MCF 10A (cell line): ENCODE measurements at regions of chr1 and their contacts with region 1.

Region 1: DNA sequence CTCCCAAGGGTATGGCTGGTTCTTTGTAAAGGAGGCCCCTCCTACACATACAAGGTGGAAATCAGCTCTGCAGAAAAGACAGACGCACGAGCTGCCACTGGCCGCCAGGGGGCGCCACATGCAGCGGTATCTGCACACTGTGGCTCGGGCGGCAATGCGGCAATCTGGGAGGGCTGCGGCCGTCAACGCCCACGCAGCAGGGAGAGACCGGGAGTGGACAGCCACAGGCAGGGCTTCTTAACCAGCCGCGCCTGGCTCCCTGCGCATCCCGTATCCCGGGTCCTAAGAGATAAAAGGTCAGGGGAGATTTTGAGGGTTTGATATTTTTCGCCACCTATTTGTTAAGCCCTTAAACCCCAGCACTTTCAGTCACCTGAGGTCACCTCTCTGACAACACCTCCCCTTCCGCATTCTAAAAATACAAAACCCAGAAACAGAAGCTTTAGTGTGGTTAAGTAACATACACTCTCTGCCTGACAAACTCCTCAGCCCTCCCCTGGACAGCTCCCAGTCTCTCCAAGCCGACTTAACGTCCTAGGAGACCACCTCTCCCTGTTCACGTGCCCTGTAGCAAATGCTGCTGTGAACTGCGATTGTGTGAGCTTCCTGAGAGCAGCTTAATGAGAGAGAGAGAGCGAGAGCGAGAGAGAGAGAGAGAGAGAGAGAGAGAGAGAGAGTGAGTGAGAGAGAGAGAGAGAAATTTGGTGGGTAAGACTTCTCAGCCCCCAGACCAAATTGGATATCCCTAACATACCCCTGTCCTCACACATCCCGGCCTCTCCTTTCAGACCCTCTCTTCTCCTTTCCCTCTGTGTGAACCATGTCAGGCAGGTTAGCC is 13.5 kb upstream of the KCNA2 start:
- DNase-seq: peak; percentile 81
- H3K4me3 Mint-ChIP-seq: no peak overlapping the region
- H3K27ac Mint-ChIP-seq: no peak overlapping the region
- H3K4me1 Mint-ChIP-seq: peaks cover 6% of the 10 kb centered on the region
- H3K27me3 Mint-ChIP-seq: peaks cover 74% of the 10 kb centered on the region
- CTCF ChIP-seq: peak; percentile 94

Region 2: DNA sequence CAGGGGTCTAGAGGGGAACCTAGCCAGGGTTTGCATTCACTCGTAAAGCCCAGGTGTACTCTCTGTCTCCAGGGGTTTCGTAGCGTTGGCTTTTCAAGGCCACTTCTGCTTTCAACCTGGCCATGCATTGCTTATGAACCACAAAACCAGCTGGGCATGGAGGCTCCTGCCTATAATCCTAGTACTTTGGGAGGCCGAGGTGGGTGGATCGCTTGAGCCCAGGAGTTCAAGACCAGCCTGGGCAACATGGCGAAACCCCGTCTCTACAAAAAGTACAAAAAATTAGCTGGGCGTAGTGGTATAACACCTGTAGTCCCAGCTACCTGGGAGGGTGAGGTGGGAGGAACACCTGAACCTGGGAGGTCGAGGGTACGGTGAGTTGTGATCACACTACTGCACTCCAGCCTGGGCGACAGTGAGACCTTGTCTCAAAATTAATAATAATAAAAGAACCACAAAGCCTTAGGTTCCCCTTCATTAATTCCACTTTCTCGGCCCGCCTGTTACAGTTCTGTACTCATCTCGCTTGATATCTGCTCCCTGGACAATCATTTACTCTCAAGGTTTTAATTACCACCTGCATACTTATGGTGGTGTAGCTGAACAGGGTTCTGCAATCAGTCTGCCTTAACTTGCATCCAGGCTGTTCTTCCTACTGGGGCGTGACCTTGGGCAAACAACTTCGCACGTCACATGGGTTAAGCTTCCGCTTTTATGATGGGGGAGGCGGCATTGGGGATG is 234.9 kb before region 1 on chr1:
- CTCF ChIA-PET with region 1: no interaction called
- POLR2A ChIA-PET with region 1: no interaction called
- intact Hi-C with region 1: no loop called
- DNase-seq: no peak
- H3K4me3 Mint-ChIP-seq: no peak overlapping the region
- H3K27ac Mint-ChIP-seq: no peak overlapping the region
- H3K4me1 Mint-ChIP-seq: peaks cover 3% of the 10 kb centered on the region
- H3K27me3 Mint-ChIP-seq: no peaks in the 10 kb centered on the region
- CTCF ChIP-seq: no peak

Region 3: DNA sequence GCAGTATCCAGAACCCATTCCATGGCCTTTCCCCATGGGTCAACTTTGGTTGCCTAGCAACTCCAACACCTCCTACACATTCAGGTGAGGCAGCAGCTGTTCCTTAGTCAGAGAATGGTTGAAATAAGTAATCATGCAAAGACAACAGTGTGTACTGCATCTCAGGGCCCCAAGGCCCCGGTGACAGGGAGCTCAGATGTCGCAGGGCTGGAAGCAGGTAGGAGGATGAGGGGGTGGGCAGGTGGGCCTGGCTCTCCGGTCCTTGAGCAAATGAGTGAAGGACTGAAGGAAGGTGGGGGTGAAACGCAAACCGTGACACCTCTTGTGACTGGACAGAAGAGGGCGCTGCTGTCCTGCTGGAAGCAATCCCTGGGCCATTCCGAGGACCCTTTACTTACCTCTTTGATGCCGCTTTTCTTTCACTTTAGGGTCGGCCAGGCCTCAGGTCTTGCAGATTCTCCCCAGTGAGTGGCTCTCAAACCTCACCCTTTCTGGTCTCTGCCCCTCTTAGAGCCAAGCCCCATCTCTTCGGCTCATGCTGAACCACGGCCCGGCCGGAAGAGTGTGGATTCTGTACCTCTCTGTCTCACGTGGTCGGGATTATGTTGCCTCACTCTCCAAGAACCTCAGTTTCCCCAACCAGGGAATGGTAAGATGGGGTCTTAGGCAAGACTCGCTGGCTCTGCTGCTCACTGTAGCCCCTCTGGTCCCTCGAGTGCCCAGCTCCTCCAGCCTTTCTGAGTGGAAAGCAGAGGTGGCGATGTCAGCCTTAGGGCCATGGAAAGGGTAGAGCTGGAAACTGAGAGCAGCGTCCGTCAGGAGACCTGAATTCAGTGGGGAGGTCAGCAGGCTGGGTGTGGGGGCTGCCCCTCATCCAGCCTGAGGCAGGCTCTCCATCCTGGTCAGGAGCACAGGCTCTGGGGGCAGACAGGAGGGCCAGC is 95.0 kb before region 1 on chr1:
- CTCF ChIA-PET with region 1: interaction called, 8 read pairs
- POLR2A ChIA-PET with region 1: no interaction called
- intact Hi-C with region 1: loop called (anchors 1 kb)
- DNase-seq: peak; percentile 40
- H3K4me3 Mint-ChIP-seq: no peak overlapping the region
- H3K27ac Mint-ChIP-seq: no peak overlapping the region
- H3K4me1 Mint-ChIP-seq: peaks cover 8% of the 10 kb centered on the region
- H3K27me3 Mint-ChIP-seq: peaks cover 65% of the 10 kb centered on the region
- CTCF ChIP-seq: peak; percentile 78

Region 4: GRCh38 chr1:110605901-110606656 is 13.6 kb before region 1 on chr1 and contains the start of gene KCNA2:
- CTCF ChIA-PET with region 1: interaction called, 15 read pairs
- POLR2A ChIA-PET with region 1: no interaction called
- intact Hi-C with region 1: no loop called
- DNase-seq: no peak
- H3K4me3 Mint-ChIP-seq: peak within 1 kb of the TSS; percentile 36
- H3K27ac Mint-ChIP-seq: no peak within 1 kb of the TSS
- H3K4me1 Mint-ChIP-seq: no peaks in the 10 kb centered on the region
- H3K27me3 Mint-ChIP-seq: peaks cover 73% of the 10 kb centered on the region
- CTCF ChIP-seq: no peak
- total RNA-seq, gene KCNA2: not detected in 2 replicates

Region 5: GRCh38 chr1:110630839-110631663 is 11.4 kb after region 1 on chr1:
- CTCF ChIA-PET with region 1: interaction called, 37 read pairs
- POLR2A ChIA-PET with region 1: no interaction called
- intact Hi-C with region 1: no loop called
- DNase-seq: peak; percentile 74
- H3K4me3 Mint-ChIP-seq: no peak overlapping the region
- H3K27ac Mint-ChIP-seq: no peak overlapping the region
- H3K4me1 Mint-ChIP-seq: peaks cover 13% of the 10 kb centered on the region
- H3K27me3 Mint-ChIP-seq: peaks cover 31% of the 10 kb centered on the region
- CTCF ChIP-seq: peak; percentile 80

Region 6: GRCh38 chr1:110638058-110638457 is 18.4 kb after region 1 on chr1:
- CTCF ChIA-PET with region 1: interaction called, 18 read pairs
- POLR2A ChIA-PET with region 1: no interaction called
- intact Hi-C with region 1: no loop called
- DNase-seq: no peak
- H3K4me3 Mint-ChIP-seq: no peak overlapping the region
- H3K27ac Mint-ChIP-seq: no peak overlapping the region
- H3K4me1 Mint-ChIP-seq: peaks cover 19% of the 10 kb centered on the region
- H3K27me3 Mint-ChIP-seq: peaks cover 53% of the 10 kb centered on the region
- CTCF ChIP-seq: no peak

Region 7: GRCh38 chr1:110766025-110766647 is 146.5 kb after region 1 on chr1:
- CTCF ChIA-PET with region 1: interaction called, 48 read pairs
- POLR2A ChIA-PET with region 1: no interaction called
- intact Hi-C with region 1: loop called (anchors 1 kb)
- DNase-seq: peak; percentile 58
- H3K4me3 Mint-ChIP-seq: no peak overlapping the region
- H3K27ac Mint-ChIP-seq: no peak overlapping the region
- H3K4me1 Mint-ChIP-seq: no peaks in the 10 kb centered on the region
- H3K27me3 Mint-ChIP-seq: peaks cover 58% of the 10 kb centered on the region
- CTCF ChIP-seq: peak; percentile 83